Activated naive CD4-positive, alpha-beta T cell treated with anti-CD3 and anti-CD28 coated beads, Interleukin-2, amount 10 ng/mL, durations not matched to agents 7 days and 5 days (primary cell): ENCODE measurements at regions of chr3 and their contacts with region 1.

Region 1: GRCh38 chr3:4986782-4987537 is 7.7 kb downstream of the BHLHE40 start:
- DNase-seq: peak; percentile 87
- H3K4me3 Mint-ChIP-seq: peak overlapping the region; percentile 82
- H3K27ac Mint-ChIP-seq: peak overlapping the region; percentile 93
- H3K4me1 Mint-ChIP-seq: peaks cover 71% of the 10 kb centered on the region
- H3K27me3 Mint-ChIP-seq: peaks cover 12% of the 10 kb centered on the region

Region 2: DNA sequence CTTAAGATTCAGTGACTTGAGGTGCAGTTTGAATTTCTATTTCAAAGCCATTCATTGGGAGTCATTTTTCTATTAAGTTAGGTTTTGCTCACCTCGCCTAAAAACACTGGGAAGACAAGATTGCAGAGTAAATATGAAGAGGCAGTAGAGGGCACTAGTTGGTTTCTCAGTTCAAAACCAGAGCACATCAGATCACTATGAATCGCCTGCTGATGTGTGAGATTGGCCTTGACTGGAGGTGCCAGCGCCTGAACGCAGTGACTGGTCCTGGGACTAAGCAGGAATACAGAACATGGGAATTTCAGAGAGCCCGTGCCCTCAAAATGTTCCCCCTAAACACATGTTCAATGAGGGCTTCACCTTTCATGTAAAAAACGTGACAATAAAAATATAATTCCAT is 264.9 kb before region 1 on chr3:
- CTCF ChIA-PET with region 1: interaction called, 28 read pairs
- DNase-seq: peak; percentile 53
- H3K4me3 Mint-ChIP-seq: no peak overlapping the region
- H3K27ac Mint-ChIP-seq: peak overlapping the region; percentile 58
- H3K4me1 Mint-ChIP-seq: peaks cover 58% of the 10 kb centered on the region
- H3K27me3 Mint-ChIP-seq: no peaks in the 10 kb centered on the region

Region 3: DNA sequence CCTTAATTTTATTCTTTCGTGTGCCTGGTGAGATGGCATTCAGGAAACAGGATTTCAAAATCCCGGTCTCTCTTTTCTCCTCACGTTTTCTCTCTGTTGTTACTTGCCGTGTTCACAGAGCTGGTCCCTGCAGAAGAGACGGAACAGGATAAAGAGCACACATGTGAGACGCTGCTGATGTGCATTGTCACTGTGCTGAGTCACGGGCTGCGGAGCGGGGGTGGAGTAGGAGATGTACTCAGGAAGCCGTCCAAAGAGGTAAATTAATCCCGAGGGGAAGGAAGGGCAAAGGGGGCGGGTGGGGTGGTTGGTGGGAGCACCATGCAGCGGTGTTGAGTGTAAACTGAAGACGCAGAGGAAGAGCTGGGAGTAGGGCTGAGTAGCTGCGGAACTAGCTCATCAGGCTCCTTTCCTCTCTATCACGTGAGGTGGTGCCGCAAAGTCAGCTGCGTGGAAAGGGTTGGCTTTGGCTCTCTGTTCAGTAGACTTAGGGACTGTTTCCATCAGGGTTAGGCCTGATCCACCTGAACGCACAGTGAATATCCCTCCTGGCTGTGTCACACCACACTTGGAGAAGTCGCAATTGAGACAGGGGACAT is 172.6 kb before region 1 on chr3:
- CTCF ChIA-PET with region 1: no interaction called
- DNase-seq: no peak
- H3K4me3 Mint-ChIP-seq: peak overlapping the region; percentile 10
- H3K27ac Mint-ChIP-seq: no peak overlapping the region
- H3K4me1 Mint-ChIP-seq: peaks cover 5% of the 10 kb centered on the region
- H3K27me3 Mint-ChIP-seq: no peaks in the 10 kb centered on the region

Region 4: GRCh38 chr3:4826237-4827100 is 160.5 kb before region 1 on chr3:
- CTCF ChIA-PET with region 1: interaction called, 13 read pairs
- DNase-seq: no peak
- H3K4me3 Mint-ChIP-seq: peak overlapping the region; percentile 78
- H3K27ac Mint-ChIP-seq: peak overlapping the region; percentile 86
- H3K4me1 Mint-ChIP-seq: peaks cover 97% of the 10 kb centered on the region
- H3K27me3 Mint-ChIP-seq: peaks cover 3% of the 10 kb centered on the region

Region 5: DNA sequence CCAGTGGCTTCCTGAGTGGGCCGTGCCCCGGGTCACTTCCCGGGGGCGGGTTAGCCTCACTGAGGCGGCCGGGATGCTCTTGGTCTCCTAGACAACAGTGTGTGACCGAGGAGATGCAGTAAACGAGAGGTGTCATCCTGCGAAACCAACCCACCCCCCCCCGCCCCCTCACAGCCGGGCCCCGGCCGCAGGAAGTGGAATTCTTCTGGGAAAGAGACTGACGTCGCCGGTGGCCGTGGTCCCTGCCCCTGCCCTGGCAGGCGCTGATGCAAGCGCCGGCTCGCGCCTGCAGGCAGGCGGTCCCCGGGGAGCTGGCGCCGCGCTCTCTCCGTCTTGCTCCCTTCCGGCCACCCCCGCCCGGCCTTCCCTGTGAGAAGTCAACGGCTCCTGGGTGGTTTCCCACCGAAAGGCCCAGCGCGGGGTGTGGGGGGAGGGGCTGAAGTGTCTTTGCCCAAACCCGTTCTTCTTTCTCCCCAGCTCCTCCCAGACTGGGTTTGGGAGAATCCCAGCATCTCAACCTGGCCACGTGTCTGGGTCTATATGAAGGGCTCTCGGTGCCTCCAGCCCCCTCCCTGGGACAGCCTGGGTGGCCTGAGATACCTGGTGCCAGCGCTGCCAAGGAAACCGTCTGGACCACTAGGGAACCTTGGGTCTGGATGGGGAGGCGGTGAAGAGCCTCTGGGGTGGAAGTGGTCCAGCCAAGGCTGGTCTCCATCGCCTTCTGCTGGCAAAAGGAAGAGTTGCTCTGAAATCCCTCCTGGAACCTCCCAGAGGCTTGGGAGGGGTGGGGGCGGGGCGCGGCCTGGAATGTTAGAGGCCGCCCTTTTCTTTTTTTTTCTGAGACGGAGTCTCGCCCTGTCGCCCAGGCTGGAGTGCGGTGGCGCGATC is 39.6 kb after region 1 on chr3:
- CTCF ChIA-PET with region 1: interaction called, 112 read pairs
- DNase-seq: peak; percentile 71
- H3K4me3 Mint-ChIP-seq: peak overlapping the region; percentile 76
- H3K27ac Mint-ChIP-seq: peak overlapping the region; percentile 45
- H3K4me1 Mint-ChIP-seq: peaks cover 51% of the 10 kb centered on the region
- H3K27me3 Mint-ChIP-seq: peaks cover 35% of the 10 kb centered on the region

Region 6: DNA sequence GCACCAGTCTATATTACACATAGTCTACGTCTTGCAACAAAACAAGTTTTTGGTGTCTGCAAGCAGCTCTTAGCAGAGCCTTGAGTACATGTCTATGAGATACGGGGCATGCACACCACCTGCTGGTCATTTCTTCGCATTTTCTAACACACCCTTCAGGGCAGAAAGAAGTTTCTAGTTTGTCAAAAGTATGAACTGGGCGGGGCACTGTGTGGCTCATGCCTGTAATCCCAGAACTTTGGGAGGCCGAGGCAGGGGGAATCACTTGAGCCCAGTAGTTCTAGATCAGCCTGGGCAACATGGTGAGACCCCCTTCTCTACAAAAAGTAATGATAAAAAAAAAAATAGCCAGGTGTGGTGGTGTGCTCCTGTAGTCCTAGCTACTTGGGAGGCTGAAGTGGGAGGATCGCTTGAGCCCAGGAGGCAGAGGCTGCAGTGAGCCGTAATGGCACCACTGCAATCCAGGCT is 70.9 kb after region 1 on chr3:
- CTCF ChIA-PET with region 1: interaction called, 31 read pairs
- DNase-seq: peak; percentile 88
- H3K4me3 Mint-ChIP-seq: no peak overlapping the region
- H3K27ac Mint-ChIP-seq: no peak overlapping the region
- H3K4me1 Mint-ChIP-seq: peaks cover 26% of the 10 kb centered on the region
- H3K27me3 Mint-ChIP-seq: peaks cover 25% of the 10 kb centered on the region